Activated naive CD4-positive, alpha-beta T cell treated with anti-CD3 and anti-CD28 coated beads for 36 hours (primary cell): ENCODE measurements at regions of chr5 and their contacts with region 1.

Region 1: GRCh38 chr5:141992349-141992963 is 20.4 kb downstream of the GNPDA1 start:
- DNase-seq: peak; percentile 95
- H3K4me3 Mint-ChIP-seq: no peak overlapping the region
- H3K27ac Mint-ChIP-seq: peak overlapping the region; percentile 53
- H3K4me1 Mint-ChIP-seq: peaks cover 13% of the 10 kb centered on the region
- H3K27me3 Mint-ChIP-seq: no peaks in the 10 kb centered on the region

Region 2: DNA sequence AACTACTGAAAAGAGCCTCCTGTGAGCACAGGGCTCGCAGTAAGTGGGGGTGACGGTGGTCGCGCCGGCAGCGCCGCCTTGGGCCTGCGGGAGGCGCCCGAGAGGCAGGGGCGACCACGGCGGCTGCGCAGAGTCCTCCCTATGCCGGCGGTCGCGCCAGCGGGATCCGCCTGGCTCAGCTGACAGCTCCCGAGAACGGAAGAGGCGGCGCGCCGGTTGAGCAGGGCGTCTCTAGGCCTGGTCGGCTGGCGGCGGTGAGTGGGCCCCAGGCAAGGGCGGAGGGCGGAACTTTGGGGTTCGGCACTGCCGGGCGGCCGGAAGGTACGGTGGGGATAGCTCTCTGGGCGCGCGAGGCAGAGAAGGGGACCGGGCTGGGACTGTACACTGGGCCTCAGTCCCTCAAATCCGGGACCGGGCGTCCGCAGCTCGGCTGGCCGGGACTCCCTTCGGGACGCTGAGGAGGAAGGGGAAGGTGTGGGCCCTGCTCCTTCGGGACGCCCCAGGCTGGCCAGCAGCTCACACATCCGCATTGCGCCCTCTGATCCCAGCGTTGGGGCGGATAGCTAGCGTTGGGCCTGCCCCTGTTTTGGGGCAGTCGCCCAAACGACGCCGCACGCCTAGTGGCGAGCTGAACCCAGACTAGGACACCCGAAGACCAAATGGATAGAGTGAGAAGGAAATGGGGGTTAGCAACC is 23.4 kb before region 1 on chr5 and contains the start of gene RNF14:
- CTCF ChIA-PET with region 1: interaction called, 27 read pairs
- intact Hi-C with region 1: no loop called
- DNase-seq: peak; percentile 96
- H3K4me3 Mint-ChIP-seq: peak within 1 kb of the TSS; percentile 93
- H3K27ac Mint-ChIP-seq: peak within 1 kb of the TSS; percentile 91
- H3K4me1 Mint-ChIP-seq: peaks cover 37% of the 10 kb centered on the region
- H3K27me3 Mint-ChIP-seq: no peaks in the 10 kb centered on the region
- total RNA-seq, gene RNF14: 29.8 to 35.6 TPM

Region 3: DNA sequence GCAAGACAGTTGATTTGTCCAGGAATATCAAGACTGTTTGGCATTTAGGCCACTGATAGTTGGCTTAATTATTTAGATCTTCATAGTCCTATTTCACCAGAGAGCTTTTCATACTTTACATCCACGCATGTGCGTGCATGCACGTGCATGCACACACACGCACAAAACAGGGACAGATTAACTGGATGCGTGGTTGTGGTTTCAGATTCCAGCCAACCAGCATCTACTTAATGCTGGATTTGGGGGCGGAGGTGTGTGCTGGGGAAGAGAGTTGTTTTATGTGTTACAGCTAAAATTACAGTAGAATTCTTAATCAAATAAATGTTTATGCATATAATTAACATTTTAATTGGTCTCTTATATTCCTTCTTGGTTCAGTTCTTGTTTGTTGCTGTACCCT is 16.3 kb before region 1 on chr5:
- CTCF ChIA-PET with region 1: interaction called, 15 read pairs
- intact Hi-C with region 1: no loop called
- DNase-seq: no peak
- H3K4me3 Mint-ChIP-seq: no peak overlapping the region
- H3K27ac Mint-ChIP-seq: no peak overlapping the region
- H3K4me1 Mint-ChIP-seq: peaks cover 33% of the 10 kb centered on the region
- H3K27me3 Mint-ChIP-seq: no peaks in the 10 kb centered on the region

Region 4: DNA sequence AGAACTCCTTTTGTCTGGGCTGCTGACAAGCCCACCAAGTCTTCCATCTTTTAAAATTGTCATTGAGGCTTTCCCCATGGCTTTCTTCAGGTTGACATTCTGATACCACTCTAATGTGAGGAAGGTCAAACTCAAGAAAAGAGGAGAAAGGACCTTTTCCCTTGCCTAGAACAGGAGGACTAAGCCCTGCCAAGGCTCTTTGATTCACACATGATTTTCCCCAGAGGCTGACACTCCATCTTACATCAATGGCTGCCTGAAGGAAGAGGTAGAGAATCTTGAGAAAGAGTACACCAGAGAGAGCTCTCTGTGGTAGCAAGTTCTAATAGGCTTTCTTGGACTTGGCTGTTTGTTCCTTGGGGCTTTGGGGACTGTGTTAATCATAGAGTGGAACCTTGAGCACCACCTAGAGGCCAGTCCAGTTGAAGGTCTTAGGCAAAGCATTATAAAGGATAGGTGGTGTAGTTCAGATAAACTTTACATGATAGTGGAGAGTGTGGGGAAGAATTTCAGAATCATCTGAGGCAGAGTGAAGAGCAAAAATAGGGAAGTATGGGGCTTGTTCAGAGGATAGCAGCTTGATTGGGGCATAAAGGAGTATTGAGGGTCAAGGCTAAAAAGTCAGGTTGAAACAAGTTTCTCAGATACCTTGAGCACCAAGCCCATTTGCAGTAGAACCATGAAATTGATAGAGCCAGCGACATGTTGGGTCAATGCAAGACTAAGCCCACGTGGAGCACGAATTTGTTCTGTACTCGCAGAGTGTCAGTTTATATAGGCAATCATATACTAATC is 152.8 kb after region 1 on chr5:
- CTCF ChIA-PET with region 1: interaction called, 126 read pairs
- intact Hi-C with region 1: loop called (anchors 1 kb)
- DNase-seq: peak; percentile 82
- H3K4me3 Mint-ChIP-seq: no peak overlapping the region
- H3K27ac Mint-ChIP-seq: no peak overlapping the region
- H3K4me1 Mint-ChIP-seq: peaks cover 11% of the 10 kb centered on the region
- H3K27me3 Mint-ChIP-seq: no peaks in the 10 kb centered on the region

Region 5: GRCh38 chr5:142441616-142442015 is 449.2 kb after region 1 on chr5:
- CTCF ChIA-PET with region 1: no interaction called
- intact Hi-C with region 1: loop called (anchors 2 kb)
- DNase-seq: peak; percentile 74
- H3K4me3 Mint-ChIP-seq: no peak overlapping the region
- H3K27ac Mint-ChIP-seq: no peak overlapping the region
- H3K4me1 Mint-ChIP-seq: peaks cover 16% of the 10 kb centered on the region
- H3K27me3 Mint-ChIP-seq: peaks cover 2% of the 10 kb centered on the region

Region 6: DNA sequence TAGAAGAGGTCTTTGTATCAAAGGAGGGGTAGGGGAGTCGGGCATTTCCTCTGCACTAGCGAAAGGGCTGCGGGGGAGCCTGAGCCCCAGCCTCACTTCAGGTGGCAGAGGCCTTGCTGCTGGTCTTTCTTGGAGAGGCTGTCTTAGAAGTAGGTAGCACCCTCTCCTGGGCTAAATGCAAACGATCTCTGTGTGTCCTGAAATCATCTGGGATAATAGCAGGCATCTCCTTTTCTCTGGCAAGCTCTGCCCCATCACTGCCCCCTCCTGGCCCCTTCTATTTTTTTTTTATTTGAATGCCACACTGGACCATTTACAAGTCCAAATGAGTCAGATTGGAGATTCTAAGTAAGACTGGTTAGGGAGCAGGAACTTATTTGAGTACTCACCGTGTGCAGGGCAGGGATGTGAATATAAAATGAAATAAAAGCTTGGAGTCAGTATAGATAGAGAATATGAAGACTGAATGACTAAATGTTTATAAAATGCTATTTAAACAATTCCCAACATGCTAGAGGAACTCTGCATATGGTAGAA is 556.4 kb after region 1 on chr5:
- CTCF ChIA-PET with region 1: interaction called, 3 read pairs
- intact Hi-C with region 1: loop called (anchors 5 kb)
- DNase-seq: peak; percentile 57
- H3K4me3 Mint-ChIP-seq: no peak overlapping the region
- H3K27ac Mint-ChIP-seq: no peak overlapping the region
- H3K4me1 Mint-ChIP-seq: peaks cover 13% of the 10 kb centered on the region
- H3K27me3 Mint-ChIP-seq: peaks cover 19% of the 10 kb centered on the region

Region 7: GRCh38 chr5:142699184-142699720 is 706.8 kb after region 1 on chr5:
- CTCF ChIA-PET with region 1: interaction called, 3 read pairs
- intact Hi-C with region 1: loop called (anchors 1 kb)
- DNase-seq: peak; percentile 90
- H3K4me3 Mint-ChIP-seq: no peak overlapping the region
- H3K27ac Mint-ChIP-seq: no peak overlapping the region
- H3K4me1 Mint-ChIP-seq: peaks cover 2% of the 10 kb centered on the region
- H3K27me3 Mint-ChIP-seq: no peaks in the 10 kb centered on the region